CD4-positive, alpha-beta T cell (primary cell): ENCODE measurements at regions of chr3 and their contacts with region 1.

Region 1: GRCh38 chr3:47324278-47324865 is 41.6 kb downstream of the KLHL18 start:
- DNase-seq: peak in 13 of 14 experiments; percentile 19 to 75 (median 32)
- ATAC-seq: peak; percentile 82
- H3K4me3 ChIP-seq: no peak overlapping the region
- H3K4me3 Mint-ChIP-seq: no peak overlapping the region
- H3K27ac ChIP-seq: no peak overlapping the region
- H3K27ac Mint-ChIP-seq: no peak overlapping the region
- H3K4me1 ChIP-seq: no peaks in the 10 kb centered on the region
- H3K4me1 Mint-ChIP-seq: peaks cover 4% of the 10 kb centered on the region
- H3K27me3 ChIP-seq: no peaks in the 10 kb centered on the region
- H3K27me3 Mint-ChIP-seq: no peaks in the 10 kb centered on the region
- CTCF ChIP-seq: peak; percentile 81

Region 2: DNA sequence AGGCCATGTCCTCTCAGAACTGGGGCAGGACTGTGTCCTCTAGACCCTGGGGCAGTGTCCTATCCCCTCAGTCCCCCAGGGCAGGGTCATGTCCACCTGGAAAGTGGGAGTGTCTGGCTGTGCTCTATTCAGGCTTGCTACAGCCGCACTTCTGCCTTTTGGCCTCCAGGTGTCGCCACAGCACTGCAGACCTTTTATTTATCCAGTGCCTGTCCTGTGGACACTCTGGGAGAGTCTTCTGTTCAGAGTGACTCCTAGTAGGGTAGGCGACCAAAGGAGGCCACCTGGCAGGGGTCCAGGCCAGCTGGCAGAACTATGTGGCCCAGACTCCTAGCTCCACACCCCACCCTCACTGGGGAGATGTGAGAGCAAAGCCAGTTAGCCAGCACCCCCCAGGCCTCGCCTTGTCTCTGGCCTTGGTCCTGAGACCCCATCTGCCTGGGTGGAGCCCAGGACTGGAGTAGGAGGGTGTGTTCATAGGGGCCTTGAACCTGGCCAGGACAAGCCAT is 619.3 kb before region 1 on chr3:
- CTCF ChIA-PET with region 1: no interaction called
- POLR2A ChIA-PET with region 1: no interaction called
- intact Hi-C with region 1: loop called (anchors 2 to 10 kb)
- DNase-seq: peak; percentile 47 to 83 (median 59)
- ATAC-seq: peak; percentile 88
- H3K4me3 ChIP-seq: no peak overlapping the region
- H3K4me3 Mint-ChIP-seq: no peak overlapping the region
- H3K27ac ChIP-seq: no peak overlapping the region
- H3K27ac Mint-ChIP-seq: no peak overlapping the region
- H3K4me1 ChIP-seq: peaks cover 30% of the 10 kb centered on the region
- H3K4me1 Mint-ChIP-seq: peaks cover 17% of the 10 kb centered on the region
- H3K27me3 ChIP-seq: peaks cover 0 to 9% of the 10 kb centered on the region in 2 experiments
- H3K27me3 Mint-ChIP-seq: no peaks in the 10 kb centered on the region
- CTCF ChIP-seq: peak; percentile 99

Region 3: DNA sequence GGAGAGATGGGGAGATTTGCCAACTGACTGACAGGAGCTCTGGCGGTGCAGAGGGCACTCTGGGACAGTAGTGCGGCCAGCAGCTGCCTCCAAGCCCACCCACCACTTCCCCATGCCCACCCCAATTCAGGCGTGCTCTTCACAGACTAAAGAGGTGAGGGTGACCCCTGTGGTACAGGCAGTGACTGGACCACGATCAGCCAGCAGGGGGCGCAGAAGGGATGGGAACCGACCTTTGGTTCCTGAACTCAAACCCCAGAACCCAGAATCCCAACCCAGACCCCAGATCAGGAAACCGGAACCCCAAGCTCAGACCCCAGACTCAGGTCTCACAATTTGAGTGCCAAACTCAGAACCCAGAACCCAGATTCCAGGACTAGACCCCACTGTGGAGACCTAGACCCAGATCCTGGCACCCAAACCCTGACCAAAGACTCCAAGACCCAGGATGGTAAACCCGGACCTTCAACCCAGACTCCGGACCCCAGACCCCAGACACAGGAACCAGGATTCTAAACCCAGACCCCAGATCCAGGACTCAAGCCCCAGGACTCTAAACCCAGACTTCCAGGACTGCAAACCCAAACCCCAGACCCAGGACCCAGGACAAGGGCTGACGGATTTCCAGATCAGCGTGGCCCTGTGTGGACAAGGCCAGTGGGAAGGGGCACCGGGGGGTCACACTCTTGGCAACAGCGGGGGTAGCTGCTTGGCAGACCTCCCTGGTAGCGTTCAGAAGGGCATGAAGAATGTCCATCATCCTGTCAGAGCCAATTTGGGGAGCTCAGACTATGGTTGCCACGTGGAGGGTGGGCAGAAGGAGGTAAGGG is 457.4 kb before region 1 on chr3:
- CTCF ChIA-PET with region 1: no interaction called
- POLR2A ChIA-PET with region 1: no interaction called
- intact Hi-C with region 1: loop called (anchors 1 kb)
- DNase-seq: peak; percentile 67 to 90 (median 80)
- ATAC-seq: peak; percentile 84
- H3K4me3 ChIP-seq: no peak overlapping the region
- H3K4me3 Mint-ChIP-seq: no peak overlapping the region
- H3K27ac ChIP-seq: no peak overlapping the region
- H3K27ac Mint-ChIP-seq: no peak overlapping the region
- H3K4me1 ChIP-seq: peaks cover 5% of the 10 kb centered on the region
- H3K4me1 Mint-ChIP-seq: no peaks in the 10 kb centered on the region
- H3K27me3 ChIP-seq: no peaks in the 10 kb centered on the region
- H3K27me3 Mint-ChIP-seq: peaks cover 5% of the 10 kb centered on the region
- CTCF ChIP-seq: peak; percentile 80

Region 4: GRCh38 chr3:46923559-46924350 is 400.6 kb before region 1 on chr3:
- CTCF ChIA-PET with region 1: no interaction called
- POLR2A ChIA-PET with region 1: no interaction called
- intact Hi-C with region 1: loop called in 1 of 2 experiments (anchors 5 kb)
- DNase-seq: peak in 12 of 14 experiments; percentile 20 to 65 (median 28)
- ATAC-seq: peak; percentile 62
- H3K4me3 ChIP-seq: no peak overlapping the region
- H3K4me3 Mint-ChIP-seq: no peak overlapping the region
- H3K27ac ChIP-seq: no peak overlapping the region
- H3K27ac Mint-ChIP-seq: peak overlapping the region; percentile 49
- H3K4me1 ChIP-seq: peaks cover 46% of the 10 kb centered on the region
- H3K4me1 Mint-ChIP-seq: peaks cover 39% of the 10 kb centered on the region
- H3K27me3 ChIP-seq: no peaks in the 10 kb centered on the region
- H3K27me3 Mint-ChIP-seq: no peaks in the 10 kb centered on the region
- CTCF ChIP-seq: peak; percentile 62

Region 5: DNA sequence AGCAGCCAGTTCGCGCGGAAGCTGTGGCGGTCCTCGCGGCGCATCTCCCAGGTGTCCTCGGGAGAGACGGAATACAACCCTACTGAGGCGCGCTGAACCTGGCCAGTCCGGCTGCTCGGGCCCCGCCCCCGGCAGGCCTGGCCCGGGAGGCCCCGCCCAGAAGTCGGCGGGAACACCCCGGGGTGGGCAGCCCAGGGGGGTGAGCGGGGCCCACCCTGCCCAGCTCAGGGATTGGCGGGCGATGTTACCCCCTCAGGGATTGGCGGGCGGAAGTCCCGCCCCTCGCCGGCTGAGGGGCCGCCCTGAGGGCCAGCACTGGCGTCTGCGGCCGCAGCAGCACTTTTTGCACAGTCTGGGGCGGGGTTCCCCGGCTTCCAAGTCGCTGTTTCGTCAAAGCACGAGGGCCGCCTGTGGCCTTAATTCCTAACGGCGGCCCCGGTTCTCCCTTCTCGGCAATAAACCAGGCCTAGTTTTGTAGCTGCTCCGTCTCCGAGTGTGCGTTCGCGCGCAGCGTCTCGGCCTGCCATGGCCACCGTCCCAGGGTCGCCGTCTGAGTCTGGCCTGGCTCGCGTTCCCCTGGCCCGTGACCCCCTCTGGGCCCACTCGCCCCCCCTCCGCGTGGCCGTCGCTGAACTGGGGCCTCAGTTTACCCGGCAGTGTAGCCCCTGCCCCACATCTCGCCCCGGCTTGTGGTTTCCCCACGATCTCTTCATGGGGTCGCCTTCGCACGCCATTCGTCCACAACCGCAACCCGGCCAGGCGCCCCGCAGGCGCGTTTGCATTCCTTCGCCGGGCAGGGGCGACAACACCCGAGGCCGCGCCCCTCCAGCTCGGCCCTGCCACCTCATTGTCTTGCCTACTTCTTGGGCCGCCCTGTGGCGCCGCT is 314.9 kb before region 1 on chr3:
- CTCF ChIA-PET with region 1: no interaction called
- POLR2A ChIA-PET with region 1: no interaction called
- intact Hi-C with region 1: loop called in 1 of 2 experiments (anchors 5 kb)
- DNase-seq: peak; percentile 30 to 85 (median 70)
- ATAC-seq: peak; percentile 88
- H3K4me3 ChIP-seq: peak overlapping the region; percentile 51
- H3K4me3 Mint-ChIP-seq: peak overlapping the region; percentile 71
- H3K27ac ChIP-seq: peak overlapping the region in 1 of 2 donors; percentile 50
- H3K27ac Mint-ChIP-seq: peak overlapping the region; percentile 59
- H3K4me1 ChIP-seq: peaks cover 10% of the 10 kb centered on the region
- H3K4me1 Mint-ChIP-seq: peaks cover 9% of the 10 kb centered on the region
- H3K27me3 ChIP-seq: no peaks in the 10 kb centered on the region
- H3K27me3 Mint-ChIP-seq: no peaks in the 10 kb centered on the region
- CTCF ChIP-seq: no peak

Region 6: GRCh38 chr3:47082519-47082918 is 241.9 kb before region 1 on chr3:
- CTCF ChIA-PET with region 1: interaction called, 3 read pairs
- POLR2A ChIA-PET with region 1: no interaction called
- intact Hi-C with region 1: loop called in 1 of 2 experiments (anchors 10 kb)
- DNase-seq: no peak
- ATAC-seq: no peak
- H3K4me3 ChIP-seq: no peak overlapping the region
- H3K4me3 Mint-ChIP-seq: no peak overlapping the region
- H3K27ac ChIP-seq: no peak overlapping the region
- H3K27ac Mint-ChIP-seq: peak overlapping the region; percentile 25
- H3K4me1 ChIP-seq: no peaks in the 10 kb centered on the region
- H3K4me1 Mint-ChIP-seq: peaks cover 19% of the 10 kb centered on the region
- H3K27me3 ChIP-seq: no peaks in the 10 kb centered on the region
- H3K27me3 Mint-ChIP-seq: no peaks in the 10 kb centered on the region
- CTCF ChIP-seq: no peak